Esophagus muscularis mucosa (tissue), 4 donors: ENCODE measurements at regions of chr5 and their contacts with region 1.

Region 1: DNA sequence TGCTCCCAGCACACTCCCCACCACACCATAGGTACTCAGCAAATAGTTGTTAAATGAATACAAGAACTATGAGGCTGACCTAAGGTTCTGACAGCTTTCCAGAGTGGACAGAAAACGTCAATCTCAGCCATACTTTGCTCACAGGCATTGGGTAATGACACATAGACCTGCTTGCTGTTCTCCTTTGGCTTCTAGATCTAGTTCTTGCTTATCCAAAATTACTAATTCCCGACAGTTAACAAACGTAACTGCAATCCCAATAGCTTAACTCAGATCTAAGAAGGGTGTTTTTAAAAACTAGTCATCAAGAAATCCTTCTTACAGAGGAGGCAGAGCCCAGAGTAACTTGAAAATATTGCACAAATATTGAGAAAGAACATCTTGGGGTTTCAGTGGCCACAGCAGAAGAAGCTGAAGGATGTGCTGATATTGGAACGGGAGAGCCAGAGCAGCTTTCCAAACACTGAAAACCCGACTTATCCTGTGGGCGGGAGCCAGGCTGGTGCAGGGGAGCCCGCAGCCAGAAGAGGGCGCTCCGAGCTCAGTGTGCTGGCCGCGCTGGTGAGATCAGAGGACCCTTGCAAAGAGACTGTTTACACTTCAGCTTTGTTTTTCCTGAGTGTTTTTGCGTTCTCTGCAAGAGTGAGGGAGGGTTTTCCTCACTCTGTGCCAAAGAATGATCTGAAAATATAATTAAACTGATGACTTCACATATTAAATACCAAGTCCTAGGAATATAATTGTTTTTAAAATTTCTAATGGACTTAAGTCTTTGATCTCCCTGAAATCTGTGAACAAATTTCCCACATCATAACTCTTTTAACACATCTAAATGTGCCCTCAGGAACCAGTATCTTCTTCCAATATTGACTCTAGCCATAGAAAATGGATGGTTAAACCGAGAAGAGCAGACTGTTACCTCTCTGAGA is 30.3 kb downstream of the FGF1 start:
- DNase-seq: no peak
- H3K4me3 ChIP-seq: no peak overlapping the region
- H3K27ac ChIP-seq: peak overlapping the region in 3 of 4 donors; percentile 15 to 56 (median 32)
- H3K4me1 ChIP-seq: peaks cover 10 to 22% (median 14%) of the 10 kb centered on the region in 4 donors
- H3K27me3 ChIP-seq: no peaks in the 10 kb centered on the region
- CTCF ChIP-seq: peak in 2 of 3 experiments; percentile 97 to 98
- EP300 ChIP-seq: no peak
- POLR2A ChIP-seq: no peak

Region 2: GRCh38 chr5:142611154-142611553 is 44.4 kb before region 1 on chr5:
- intact Hi-C with region 1: loop called (anchors 2 kb)
- DNase-seq: no peak
- H3K4me3 ChIP-seq: no peak overlapping the region
- H3K27ac ChIP-seq: no peak overlapping the region
- H3K4me1 ChIP-seq: peaks cover 0 to 24% (median 14%) of the 10 kb centered on the region in 4 donors
- H3K27me3 ChIP-seq: no peaks in the 10 kb centered on the region
- CTCF ChIP-seq: peak in 2 of 3 experiments; percentile 87 to 94
- EP300 ChIP-seq: no peak
- POLR2A ChIP-seq: no peak

Region 3: DNA sequence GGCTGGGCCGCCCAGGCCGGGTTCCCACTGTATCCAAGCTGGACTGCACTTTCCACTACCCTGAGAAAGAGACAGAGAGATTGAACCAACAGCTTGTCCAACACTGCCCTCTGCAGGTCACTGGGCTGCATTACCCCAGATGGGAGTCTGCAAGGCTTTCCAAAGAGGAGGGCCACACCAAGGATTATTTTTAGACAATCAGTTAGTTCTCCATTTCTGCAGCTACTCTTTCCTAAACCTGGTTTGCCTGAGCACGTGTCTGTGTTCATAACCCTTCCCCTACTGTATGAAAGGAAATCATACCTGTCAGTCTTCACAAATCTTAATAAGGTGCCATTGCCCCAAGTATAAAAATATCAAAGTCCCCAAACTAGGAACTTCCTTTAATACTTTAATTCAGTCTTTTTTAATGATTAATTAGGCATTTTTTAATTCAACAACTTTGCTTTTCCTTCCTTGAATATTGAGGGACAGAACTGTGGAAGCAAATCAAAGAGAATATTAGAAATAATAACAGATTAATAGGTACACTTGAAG is 43.6 kb after region 1 on chr5:
- intact Hi-C with region 1: loop called (anchors 2 kb)
- DNase-seq: peak; percentile 98
- H3K4me3 ChIP-seq: no peak overlapping the region
- H3K27ac ChIP-seq: peak overlapping the region; percentile 62 to 77 (median 74)
- H3K4me1 ChIP-seq: peaks cover 28 to 36% (median 31%) of the 10 kb centered on the region in 4 donors
- H3K27me3 ChIP-seq: no peaks in the 10 kb centered on the region
- CTCF ChIP-seq: peak in 2 of 3 experiments; percentile 98 to 99
- EP300 ChIP-seq: no peak
- POLR2A ChIP-seq: no peak